Natural killer cell (primary cell): ENCODE measurements at regions of chr6 and their contacts with region 1.

Region 1: GRCh38 chr6:28080631-28081485 is 490 bp downstream of the ZNF165 start:
- DNase-seq: peak; percentile 87 to 96
- ATAC-seq: peak; percentile 81 to 90 (median 87)
- H3K4me3 ChIP-seq: peak overlapping the region; percentile 83
- H3K4me3 Mint-ChIP-seq: peak overlapping the region; percentile 90
- H3K27ac ChIP-seq: peak overlapping the region; percentile 92
- H3K27ac Mint-ChIP-seq: peak overlapping the region; percentile 85 to 90
- H3K4me1 ChIP-seq: peaks cover 10% of the 10 kb centered on the region
- H3K4me1 Mint-ChIP-seq: peaks cover 17 to 26% of the 10 kb centered on the region in 2 donors
- H3K27me3 ChIP-seq: no peaks in the 10 kb centered on the region
- H3K27me3 Mint-ChIP-seq: peaks cover 0 to 9% of the 10 kb centered on the region in 2 donors
- CTCF ChIP-seq: no peak

Region 2: GRCh38 chr6:28104392-28105244 is 23.8 kb after region 1 on chr6:
- intact Hi-C with region 1: loop called (anchors 1 kb)
- DNase-seq: peak; percentile 78 to 92
- ATAC-seq: peak; percentile 99
- H3K4me3 ChIP-seq: peak overlapping the region; percentile 57
- H3K4me3 Mint-ChIP-seq: peak overlapping the region; percentile 86
- H3K27ac ChIP-seq: peak overlapping the region; percentile 83
- H3K27ac Mint-ChIP-seq: peak overlapping the region; percentile 75 to 89
- H3K4me1 ChIP-seq: peaks cover 6% of the 10 kb centered on the region
- H3K4me1 Mint-ChIP-seq: peaks cover 11 to 12% of the 10 kb centered on the region in 2 donors
- H3K27me3 ChIP-seq: no peaks in the 10 kb centered on the region
- H3K27me3 Mint-ChIP-seq: peaks cover 22 to 30% of the 10 kb centered on the region in 2 donors
- CTCF ChIP-seq: peak; percentile 55

Region 3: GRCh38 chr6:28117386-28118050 is 36.7 kb after region 1 on chr6:
- intact Hi-C with region 1: no loop called
- DNase-seq: no peak
- ATAC-seq: no peak
- H3K4me3 ChIP-seq: no peak overlapping the region
- H3K4me3 Mint-ChIP-seq: no peak overlapping the region
- H3K27ac ChIP-seq: no peak overlapping the region
- H3K27ac Mint-ChIP-seq: no peak overlapping the region
- H3K4me1 ChIP-seq: no peaks in the 10 kb centered on the region
- H3K4me1 Mint-ChIP-seq: no peaks in the 10 kb centered on the region
- H3K27me3 ChIP-seq: no peaks in the 10 kb centered on the region
- H3K27me3 Mint-ChIP-seq: no peaks in the 10 kb centered on the region
- CTCF ChIP-seq: no peak

Region 4: GRCh38 chr6:28355743-28356665 is 275.1 kb after region 1 on chr6:
- intact Hi-C with region 1: loop called (anchors 5 kb)
- DNase-seq: peak; percentile 55 to 86
- ATAC-seq: peak; percentile 91 to 96 (median 91)
- H3K4me3 ChIP-seq: peak overlapping the region; percentile 64
- H3K4me3 Mint-ChIP-seq: peak overlapping the region; percentile 96
- H3K27ac ChIP-seq: peak overlapping the region; percentile 43
- H3K27ac Mint-ChIP-seq: peak overlapping the region; percentile 81 to 93
- H3K4me1 ChIP-seq: peaks cover 18% of the 10 kb centered on the region
- H3K4me1 Mint-ChIP-seq: peaks cover 20 to 23% of the 10 kb centered on the region in 2 donors
- H3K27me3 ChIP-seq: no peaks in the 10 kb centered on the region
- H3K27me3 Mint-ChIP-seq: no peaks in the 10 kb centered on the region
- CTCF ChIP-seq: peak; percentile 91